ENCODE measurements at regions of chr5 and their contacts with region 1.

Region 1: GRCh38 chr5:99004960-99005359 is 76.2 kb upstream of the CHD1 start:
- DNase-seq: no peak
- ATAC-seq: peak; percentile 98
- H3K4me3 Mint-ChIP-seq: peak overlapping the region; percentile 44
- H3K27ac Mint-ChIP-seq: peak overlapping the region; percentile 56
- H3K4me1 Mint-ChIP-seq: peaks cover 28% of the 10 kb centered on the region
- H3K27me3 Mint-ChIP-seq: no peaks in the 10 kb centered on the region
- CTCF ChIP-seq: no peak

Region 2: DNA sequence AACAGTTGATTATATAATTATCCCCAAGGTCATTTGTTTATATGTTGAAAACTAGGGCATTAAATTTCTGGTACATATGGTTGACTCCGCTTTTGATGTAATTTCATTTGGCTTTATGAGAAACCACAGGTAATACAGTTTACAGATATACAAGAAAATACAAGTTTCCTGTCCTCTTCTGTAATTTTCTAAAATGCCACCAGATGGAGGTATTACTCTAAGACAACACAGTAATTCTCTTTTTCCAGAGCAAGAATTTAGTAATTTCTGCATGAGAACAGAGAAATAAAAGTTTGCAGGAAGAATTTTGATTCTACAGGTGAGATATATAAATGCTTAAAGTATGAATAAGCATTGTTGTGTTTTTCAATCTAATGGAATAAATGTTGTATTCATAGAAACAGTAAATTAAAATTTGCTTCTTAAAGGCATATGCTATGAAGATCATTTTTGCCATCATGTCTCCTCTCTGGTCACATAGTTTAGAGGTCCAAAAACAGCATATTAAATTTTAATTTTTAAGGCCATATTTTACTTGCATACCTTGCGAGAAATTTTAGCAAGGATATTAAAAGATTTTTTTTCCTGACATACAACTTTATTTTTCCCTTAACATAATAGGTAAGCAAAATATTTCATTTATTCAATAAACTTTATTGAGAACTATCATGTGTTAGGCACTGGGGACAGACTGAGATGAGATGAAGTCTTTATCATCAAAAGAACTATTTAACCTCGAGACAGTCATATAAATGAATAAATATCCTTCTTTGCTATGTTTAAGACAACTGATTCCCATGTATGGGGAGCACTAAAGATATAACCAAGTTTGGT is 98.9 kb before region 1 on chr5:
- CTCF ChIA-PET with region 1: no interaction called
- POLR2A ChIA-PET with region 1: no interaction called
- intact Hi-C with region 1: loop called (anchors 2 kb)
- DNase-seq: no peak
- ATAC-seq: peak; percentile 69
- H3K4me3 Mint-ChIP-seq: no peak overlapping the region
- H3K27ac Mint-ChIP-seq: peak overlapping the region; percentile 1
- H3K4me1 Mint-ChIP-seq: peaks cover 34% of the 10 kb centered on the region
- H3K27me3 Mint-ChIP-seq: no peaks in the 10 kb centered on the region
- CTCF ChIP-seq: peak; percentile 94

Region 3: GRCh38 chr5:99025298-99026045 is 20.5 kb after region 1 on chr5:
- CTCF ChIA-PET with region 1: interaction called, 7 read pairs
- POLR2A ChIA-PET with region 1: interaction called, 56 read pairs
- intact Hi-C with region 1: loop called (anchors 2 kb)
- DNase-seq: no peak
- ATAC-seq: no peak
- H3K4me3 Mint-ChIP-seq: no peak overlapping the region
- H3K27ac Mint-ChIP-seq: peak overlapping the region; percentile 59
- H3K4me1 Mint-ChIP-seq: peaks cover 58% of the 10 kb centered on the region
- H3K27me3 Mint-ChIP-seq: no peaks in the 10 kb centered on the region
- CTCF ChIP-seq: no peak

Measured in activated B cell treated with CpG ODN at 0.5 μM for 24 hours (primary cell).